HEK293 (cell line): ENCODE measurements at regions of chr1 and their contacts with region 1.

Region 1: GRCh38 chr1:3453203-3453761 is 1.2 kb upstream of the ARHGEF16 start:
- H3K4me3 ChIP-seq: no peak overlapping the region
- H3K27ac ChIP-seq: no peak overlapping the region
- H3K4me1 ChIP-seq: no peaks in the 10 kb centered on the region
- CTCF ChIP-seq: peak; percentile 91

Region 2: GRCh38 chr1:3093898-3094626 is 359.2 kb before region 1 on chr1:
- CTCF ChIA-PET with region 1: no interaction called
- POLR2A ChIA-PET with region 1: no interaction called
- H3K4me3 ChIP-seq: no peak overlapping the region
- H3K27ac ChIP-seq: no peak overlapping the region
- H3K4me1 ChIP-seq: no peaks in the 10 kb centered on the region
- CTCF ChIP-seq: no peak

Region 3: GRCh38 chr1:3463891-3464648 is 10.8 kb after region 1 on chr1:
- CTCF ChIA-PET with region 1: interaction called, 14 read pairs
- POLR2A ChIA-PET with region 1: interaction called, 3 read pairs
- H3K4me3 ChIP-seq: no peak overlapping the region
- H3K27ac ChIP-seq: no peak overlapping the region
- H3K4me1 ChIP-seq: no peaks in the 10 kb centered on the region
- CTCF ChIP-seq: no peak

Region 4: GRCh38 chr1:3477241-3477995 is 24.1 kb after region 1 on chr1:
- CTCF ChIA-PET with region 1: interaction called, 28 read pairs
- POLR2A ChIA-PET with region 1: interaction called, 5 read pairs
- H3K4me3 ChIP-seq: no peak overlapping the region
- H3K27ac ChIP-seq: no peak overlapping the region
- H3K4me1 ChIP-seq: no peaks in the 10 kb centered on the region
- CTCF ChIP-seq: no peak

Region 5: GRCh38 chr1:3491291-3492246 is 38.3 kb after region 1 on chr1:
- CTCF ChIA-PET with region 1: interaction called, 51 read pairs
- POLR2A ChIA-PET with region 1: no interaction called
- H3K4me3 ChIP-seq: 0 out of 2 replicates have a peak overlapping the region, but pooled peaks have one; percentile 9
- H3K27ac ChIP-seq: no peak overlapping the region
- H3K4me1 ChIP-seq: no peaks in the 10 kb centered on the region
- CTCF ChIP-seq: peak; percentile 89